Activated T-helper 2 cell treated with anti-CD3 and anti-CD28 coated beads, Interferon-gamma antibody, Interleukin-2, Interleukin-4, amounts not matched to agents 10 μg/mL and 5 μg/mL and 100 μg/mL, durations not matched to agents 14 hours and 24 hours and 36 hours (primary cell): ENCODE measurements at regions of chr2 and their contacts with region 1.

Region 1: GRCh38 chr2:85327822-85328617 is at the start of gene TGOLN2:
- DNase-seq: peak; percentile 91
- H3K4me3 Mint-ChIP-seq: peak within 1 kb of the TSS; percentile 100
- H3K27ac Mint-ChIP-seq: peak within 1 kb of the TSS; percentile 100
- H3K4me1 Mint-ChIP-seq: peaks cover 44% of the 10 kb centered on the region
- H3K27me3 Mint-ChIP-seq: no peaks in the 10 kb centered on the region
- total RNA-seq, gene TGOLN2: 94.0 and 96.5 TPM in 2 replicates

Region 2: GRCh38 chr2:84939426-84940087 is 388.5 kb before region 1 on chr2:
- intact Hi-C with region 1: loop called (anchors 5 kb)
- DNase-seq: peak; percentile 85
- H3K4me3 Mint-ChIP-seq: peak overlapping the region; percentile 72
- H3K27ac Mint-ChIP-seq: peak overlapping the region; percentile 98
- H3K4me1 Mint-ChIP-seq: peaks cover 50% of the 10 kb centered on the region
- H3K27me3 Mint-ChIP-seq: no peaks in the 10 kb centered on the region

Region 3: DNA sequence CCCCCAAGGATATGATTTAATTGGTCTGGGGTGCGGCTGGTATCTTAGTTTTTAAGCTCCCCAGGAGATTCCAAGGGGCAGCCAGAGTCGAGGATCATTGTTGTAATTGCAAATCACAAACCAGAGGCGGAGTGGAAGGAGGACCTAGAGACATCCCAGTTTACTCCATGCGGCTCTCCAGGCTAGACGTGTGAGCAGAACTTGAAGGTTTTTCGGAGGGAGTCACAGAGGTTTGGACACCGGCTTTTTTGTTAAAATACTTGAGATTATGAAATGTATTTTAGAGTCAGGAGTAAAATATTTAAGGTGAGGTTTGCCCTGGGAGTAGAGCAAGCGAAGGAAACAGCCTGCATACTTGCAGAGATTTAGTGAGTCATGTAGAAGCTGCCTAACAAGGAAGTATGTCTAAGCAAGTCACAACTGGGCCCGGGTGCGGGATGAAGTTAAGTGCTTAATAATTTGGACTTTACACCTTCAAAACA is 39.7 kb before region 1 on chr2:
- intact Hi-C with region 1: no loop called
- DNase-seq: no peak
- H3K4me3 Mint-ChIP-seq: no peak overlapping the region
- H3K27ac Mint-ChIP-seq: no peak overlapping the region
- H3K4me1 Mint-ChIP-seq: peaks cover 22% of the 10 kb centered on the region
- H3K27me3 Mint-ChIP-seq: no peaks in the 10 kb centered on the region

Region 4: GRCh38 chr2:85354286-85355072 is 26.5 kb after region 1 on chr2 and contains the starts of genes ELMOD3 and RETSAT:
- intact Hi-C with region 1: loop called (anchors 1 kb)
- DNase-seq: peak; percentile 97
- H3K4me3 Mint-ChIP-seq: peak within 1 kb of the TSS; percentile 99
- H3K27ac Mint-ChIP-seq: peak within 1 kb of the TSS; percentile 97
- H3K4me1 Mint-ChIP-seq: peaks cover 31% of the 10 kb centered on the region
- H3K27me3 Mint-ChIP-seq: no peaks in the 10 kb centered on the region
- total RNA-seq, gene ELMOD3: 17.0 and 18.9 TPM in 2 replicates
- total RNA-seq, gene RETSAT: 26.3 and 29.6 TPM in 2 replicates

Region 5: DNA sequence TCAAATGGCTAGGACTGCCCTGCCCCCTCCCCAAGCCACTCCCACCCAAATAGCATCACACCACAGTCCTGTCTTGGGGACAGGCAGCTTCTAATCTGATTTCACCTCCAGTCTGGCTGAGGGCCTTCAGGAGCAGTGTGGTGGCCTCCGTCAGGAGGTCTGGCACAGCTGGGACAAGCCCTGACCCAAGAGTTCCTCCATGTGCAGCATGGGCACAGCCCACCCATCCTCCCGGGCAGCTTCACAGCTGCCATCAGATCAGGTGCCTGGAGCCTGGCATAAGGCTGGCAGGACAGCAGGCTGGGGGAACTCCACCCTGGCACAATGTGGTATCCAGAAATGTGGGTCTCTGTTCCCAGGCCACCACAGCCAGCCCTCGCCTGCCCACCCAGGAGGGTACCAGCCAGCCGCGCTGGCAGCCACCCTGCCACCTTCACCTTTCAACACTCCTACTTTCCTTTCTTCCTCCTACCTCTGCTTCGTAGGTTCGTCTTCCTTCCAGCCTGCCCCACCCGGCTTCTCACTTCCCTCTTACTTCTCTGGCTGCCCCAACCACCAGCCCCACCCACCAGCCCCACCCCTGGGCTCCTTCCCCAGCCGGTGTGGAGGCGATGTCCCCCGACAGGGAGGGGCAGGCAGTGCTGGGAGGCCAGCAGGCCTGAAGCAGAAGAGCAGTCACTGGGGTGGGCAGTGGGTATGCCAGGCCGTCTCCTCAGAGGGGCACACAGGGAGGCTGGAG is 82.0 kb after region 1 on chr2 and contains the start of gene CAPG:
- intact Hi-C with region 1: loop called (anchors 5 kb)
- DNase-seq: peak; percentile 56
- H3K4me3 Mint-ChIP-seq: peak within 1 kb of the TSS; percentile 88
- H3K27ac Mint-ChIP-seq: peak within 1 kb of the TSS; percentile 83
- H3K4me1 Mint-ChIP-seq: peaks cover 56% of the 10 kb centered on the region
- H3K27me3 Mint-ChIP-seq: no peaks in the 10 kb centered on the region
- total RNA-seq, gene CAPG: 145 and 146 TPM in 2 replicates

Region 6: GRCh38 chr2:85437488-85438284 is 109.7 kb after region 1 on chr2:
- intact Hi-C with region 1: loop called (anchors 1 kb)
- DNase-seq: peak; percentile 70
- H3K4me3 Mint-ChIP-seq: peak overlapping the region; percentile 82
- H3K27ac Mint-ChIP-seq: peak overlapping the region; percentile 98
- H3K4me1 Mint-ChIP-seq: peaks cover 28% of the 10 kb centered on the region
- H3K27me3 Mint-ChIP-seq: no peaks in the 10 kb centered on the region

Region 7: DNA sequence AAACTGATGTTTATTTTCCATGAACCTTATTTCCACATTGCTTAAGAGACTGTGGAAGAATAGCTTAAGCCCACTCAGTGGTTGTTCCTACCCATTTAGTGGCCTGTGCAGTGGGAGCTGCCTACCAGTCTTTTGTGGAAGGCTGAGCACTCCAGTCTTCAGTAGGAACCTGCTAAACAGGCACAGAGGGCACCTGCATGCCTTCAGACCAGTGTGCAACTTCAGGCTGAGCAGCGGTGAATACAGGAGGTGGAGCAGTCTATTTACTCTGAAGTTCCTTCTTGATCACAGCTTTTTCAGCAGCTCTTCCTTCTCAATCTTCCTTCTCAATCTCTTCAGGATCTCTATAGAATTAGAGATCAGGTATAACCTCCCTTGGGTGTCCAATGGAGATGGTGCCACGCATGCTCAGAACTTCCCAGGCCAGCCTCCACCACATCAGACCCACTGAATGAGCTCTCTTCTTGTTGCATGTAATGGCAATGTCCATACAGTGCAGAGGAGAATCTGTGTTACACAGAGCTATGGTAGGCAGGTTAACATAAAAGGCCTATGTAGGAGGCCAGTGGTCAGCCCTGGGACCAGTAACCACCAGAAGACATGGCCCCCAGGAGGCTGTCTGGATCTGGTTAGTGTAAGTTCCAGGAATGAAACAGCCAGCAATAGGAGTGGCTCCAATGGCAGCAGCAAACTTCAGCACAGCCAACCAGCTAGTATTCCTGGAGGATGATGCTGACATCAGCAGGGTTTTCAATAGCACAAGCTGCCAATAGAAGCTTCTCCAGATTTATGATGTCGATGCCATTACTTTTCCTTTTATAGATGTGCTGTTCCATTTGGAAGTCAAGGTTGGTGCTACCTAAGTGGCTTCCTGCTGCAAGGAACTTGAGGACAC is 163.1 kb after region 1 on chr2:
- intact Hi-C with region 1: no loop called
- DNase-seq: no peak
- H3K4me3 Mint-ChIP-seq: no peak overlapping the region
- H3K27ac Mint-ChIP-seq: no peak overlapping the region
- H3K4me1 Mint-ChIP-seq: no peaks in the 10 kb centered on the region
- H3K27me3 Mint-ChIP-seq: no peaks in the 10 kb centered on the region

Region 8: GRCh38 chr2:85538486-85539360 is 210.7 kb after region 1 on chr2 and contains the start of gene MAT2A:
- intact Hi-C with region 1: loop called (anchors 2 kb)
- DNase-seq: peak; percentile 85
- H3K4me3 Mint-ChIP-seq: peak within 1 kb of the TSS; percentile 97
- H3K27ac Mint-ChIP-seq: peak within 1 kb of the TSS; percentile 97
- H3K4me1 Mint-ChIP-seq: peaks cover 43% of the 10 kb centered on the region
- H3K27me3 Mint-ChIP-seq: no peaks in the 10 kb centered on the region
- total RNA-seq, gene MAT2A: 395 and 403 TPM in 2 replicates

Region 9: DNA sequence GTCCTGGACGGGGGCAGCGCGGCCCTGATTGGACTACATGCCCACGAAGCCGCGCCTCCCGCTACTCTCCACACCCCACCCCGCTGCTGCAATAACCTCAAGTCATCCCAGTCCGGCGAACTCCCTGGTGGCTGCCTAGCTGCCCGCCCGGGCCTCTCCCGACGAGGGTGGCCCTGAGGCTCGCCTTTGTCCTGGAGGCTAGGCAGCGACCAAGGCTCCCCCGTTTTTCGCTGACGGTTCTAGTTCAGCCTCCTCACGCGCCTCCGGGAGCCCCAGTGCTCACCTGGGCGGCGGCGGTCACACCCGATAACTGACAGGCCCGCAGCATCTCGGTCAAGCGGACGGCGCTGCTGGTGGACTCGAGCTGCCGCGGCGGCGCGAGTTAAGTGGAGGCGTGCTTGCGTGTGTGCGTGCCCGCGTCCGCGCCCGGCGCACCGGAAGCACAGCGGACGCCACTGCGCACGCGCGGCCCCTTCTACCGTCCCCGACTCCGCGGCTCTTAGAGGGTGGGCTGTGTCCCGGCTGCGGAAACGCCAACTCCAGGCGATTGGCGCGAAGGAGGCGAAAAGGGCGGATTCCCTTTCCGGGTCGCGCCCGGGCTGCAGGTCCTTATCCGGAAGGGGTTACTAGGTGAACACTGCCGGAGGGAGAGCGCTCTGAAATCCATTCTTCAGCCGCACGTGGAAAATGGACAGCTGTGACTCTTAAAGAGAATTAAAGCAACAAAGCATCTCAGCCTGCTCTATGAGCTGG is 867.2 kb after region 1 on chr2 and contains the start of gene IMMT:
- intact Hi-C with region 1: loop called (anchors 2 kb)
- DNase-seq: peak; percentile 91
- H3K4me3 Mint-ChIP-seq: peak within 1 kb of the TSS; percentile 96
- H3K27ac Mint-ChIP-seq: peak within 1 kb of the TSS; percentile 89
- H3K4me1 Mint-ChIP-seq: peaks cover 43% of the 10 kb centered on the region
- H3K27me3 Mint-ChIP-seq: no peaks in the 10 kb centered on the region
- total RNA-seq, gene IMMT: 160 and 180 TPM in 2 replicates